CD4-positive, alpha-beta memory T cell (primary cell): ENCODE measurements at regions of chr4 and their contacts with region 1.

Region 1: DNA sequence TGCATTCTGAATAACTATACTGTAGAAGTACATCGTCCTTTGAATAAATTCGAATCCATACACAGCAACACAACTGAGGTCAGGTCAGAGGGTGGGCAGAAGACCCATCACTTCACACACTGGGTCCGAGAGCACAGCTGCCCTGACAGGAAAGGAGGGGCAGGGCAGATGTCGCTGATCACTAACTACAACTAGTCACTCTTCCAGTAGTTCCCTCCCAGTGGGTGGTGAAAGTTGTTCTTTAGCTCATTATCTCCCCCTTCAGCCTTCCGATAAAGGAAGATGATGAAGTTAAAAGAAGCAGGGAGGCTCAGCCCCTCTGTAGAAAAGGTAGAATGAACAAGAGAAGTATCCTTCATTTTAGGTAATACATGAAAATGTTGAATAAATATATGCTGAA is 278.9 kb downstream of the INPP4B start:
- DNase-seq: peak; percentile 69 to 74 (median 72)
- H3K4me3 ChIP-seq: peak overlapping the region; percentile 57 to 84
- H3K4me3 Mint-ChIP-seq: peak overlapping the region; percentile 80 to 97 (median 92)
- H3K27ac ChIP-seq: peak overlapping the region; percentile 75
- H3K27ac Mint-ChIP-seq: peak overlapping the region; percentile 86 to 98 (median 96)
- H3K4me1 ChIP-seq: peaks cover 73% of the 10 kb centered on the region
- H3K4me1 Mint-ChIP-seq: peaks cover 40 to 85% (median 50%) of the 10 kb centered on the region in 4 donors
- H3K27me3 ChIP-seq: no peaks in the 10 kb centered on the region
- H3K27me3 Mint-ChIP-seq: no peaks in the 10 kb centered on the region

Region 2: DNA sequence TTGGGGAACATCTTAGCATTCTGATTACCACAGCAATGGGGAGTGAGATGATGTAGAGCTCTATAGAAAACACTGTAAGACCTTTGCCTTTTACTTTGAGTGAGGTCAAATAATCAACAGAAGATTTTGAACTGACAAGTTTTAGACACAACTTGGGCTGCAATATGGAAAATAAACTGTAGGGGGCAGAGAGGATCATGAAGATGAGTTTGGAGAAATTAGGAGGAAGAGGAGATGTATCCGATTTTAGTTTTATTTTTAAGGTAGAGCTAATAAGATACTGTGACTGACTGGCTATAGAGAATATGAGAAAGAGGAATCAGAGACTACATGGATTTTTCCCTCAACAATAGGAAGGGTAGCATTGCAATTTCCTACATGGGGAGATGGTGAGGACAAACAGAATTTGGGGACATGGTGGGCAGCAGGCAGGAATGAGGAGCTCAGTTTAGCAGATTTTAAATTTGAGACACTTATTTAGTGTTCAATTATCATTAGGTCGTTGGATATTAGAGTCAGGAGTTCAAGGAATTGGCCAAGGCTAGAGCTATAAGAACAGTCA is 284.2 kb before region 1 on chr4:
- CTCF ChIA-PET with region 1: interaction called, 21 read pairs
- POLR2A ChIA-PET with region 1: interaction called, 12 read pairs
- intact Hi-C with region 1: loop called (anchors 1 kb)
- DNase-seq: peak; percentile 16 to 47 (median 43)
- H3K4me3 ChIP-seq: no peak overlapping the region
- H3K4me3 Mint-ChIP-seq: no peak overlapping the region
- H3K27ac ChIP-seq: no peak overlapping the region
- H3K27ac Mint-ChIP-seq: no peak overlapping the region
- H3K4me1 ChIP-seq: peaks cover 63% of the 10 kb centered on the region
- H3K4me1 Mint-ChIP-seq: peaks cover 16 to 23% (median 20%) of the 10 kb centered on the region in 4 donors
- H3K27me3 ChIP-seq: no peaks in the 10 kb centered on the region
- H3K27me3 Mint-ChIP-seq: no peaks in the 10 kb centered on the region

Region 3: GRCh38 chr4:142379277-142380057 is 187.7 kb before region 1 on chr4:
- CTCF ChIA-PET with region 1: interaction called, 4 read pairs
- POLR2A ChIA-PET with region 1: interaction called, 13 read pairs
- intact Hi-C with region 1: no loop called
- DNase-seq: no peak
- H3K4me3 ChIP-seq: no peak overlapping the region
- H3K4me3 Mint-ChIP-seq: peak overlapping the region in 5 of 8 donors; percentile 17 to 72 (median 60)
- H3K27ac ChIP-seq: no peak overlapping the region
- H3K27ac Mint-ChIP-seq: peak overlapping the region; percentile 31 to 92 (median 76)
- H3K4me1 ChIP-seq: peaks cover 84% of the 10 kb centered on the region
- H3K4me1 Mint-ChIP-seq: peaks cover 64 to 85% (median 74%) of the 10 kb centered on the region in 4 donors
- H3K27me3 ChIP-seq: no peaks in the 10 kb centered on the region
- H3K27me3 Mint-ChIP-seq: no peaks in the 10 kb centered on the region

Region 4: DNA sequence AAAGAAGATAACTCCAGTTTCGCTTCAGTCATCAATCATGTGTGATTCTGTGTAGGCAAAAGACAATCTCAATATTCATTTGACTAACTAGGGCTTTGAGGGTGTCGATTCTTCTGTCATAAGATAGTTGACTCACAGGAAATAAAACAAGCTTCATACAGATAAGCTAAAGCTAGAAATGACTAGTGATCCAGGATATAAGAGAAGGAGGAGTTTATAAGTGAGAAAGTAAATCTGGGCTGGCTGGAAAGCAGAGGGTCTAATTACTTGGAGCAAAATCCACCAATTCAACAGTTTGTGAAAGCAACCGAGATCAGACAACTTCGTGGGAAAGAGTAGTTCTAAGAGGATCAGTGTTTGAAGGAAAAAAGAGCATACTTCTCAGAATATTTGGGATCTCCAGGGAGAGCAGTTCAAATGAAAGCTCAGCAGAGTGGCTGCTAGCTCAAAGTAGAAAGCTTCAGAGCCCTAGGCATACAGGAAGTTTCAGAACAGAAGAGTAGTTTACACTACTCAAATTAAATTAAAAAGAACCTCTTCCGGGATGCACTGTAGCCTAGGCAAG is 150.4 kb before region 1 on chr4:
- CTCF ChIA-PET with region 1: interaction called, 14 read pairs
- POLR2A ChIA-PET with region 1: interaction called, 22 read pairs
- intact Hi-C with region 1: no loop called
- DNase-seq: peak; percentile 39 to 62 (median 48)
- H3K4me3 ChIP-seq: peak overlapping the region; percentile 11 to 33
- H3K4me3 Mint-ChIP-seq: peak overlapping the region; percentile 71 to 90 (median 84)
- H3K27ac ChIP-seq: peak overlapping the region; percentile 70
- H3K27ac Mint-ChIP-seq: peak overlapping the region; percentile 77 to 95 (median 92)
- H3K4me1 ChIP-seq: peaks cover 42% of the 10 kb centered on the region
- H3K4me1 Mint-ChIP-seq: peaks cover 29 to 48% (median 33%) of the 10 kb centered on the region in 4 donors
- H3K27me3 ChIP-seq: no peaks in the 10 kb centered on the region
- H3K27me3 Mint-ChIP-seq: no peaks in the 10 kb centered on the region

Region 5: GRCh38 chr4:142703694-142704309 is 136.6 kb after region 1 on chr4:
- CTCF ChIA-PET with region 1: interaction called, 11 read pairs
- POLR2A ChIA-PET with region 1: interaction called, 166 read pairs
- intact Hi-C with region 1: loop called (anchors 2 kb)
- DNase-seq: peak; percentile 62 to 77 (median 71)
- H3K4me3 ChIP-seq: peak overlapping the region; percentile 3 to 11
- H3K4me3 Mint-ChIP-seq: no peak overlapping the region
- H3K27ac ChIP-seq: peak overlapping the region; percentile 38
- H3K27ac Mint-ChIP-seq: no peak overlapping the region
- H3K4me1 ChIP-seq: peaks cover 95% of the 10 kb centered on the region
- H3K4me1 Mint-ChIP-seq: peaks cover 30 to 33% (median 31%) of the 10 kb centered on the region in 4 donors
- H3K27me3 ChIP-seq: no peaks in the 10 kb centered on the region
- H3K27me3 Mint-ChIP-seq: no peaks in the 10 kb centered on the region

Region 6: DNA sequence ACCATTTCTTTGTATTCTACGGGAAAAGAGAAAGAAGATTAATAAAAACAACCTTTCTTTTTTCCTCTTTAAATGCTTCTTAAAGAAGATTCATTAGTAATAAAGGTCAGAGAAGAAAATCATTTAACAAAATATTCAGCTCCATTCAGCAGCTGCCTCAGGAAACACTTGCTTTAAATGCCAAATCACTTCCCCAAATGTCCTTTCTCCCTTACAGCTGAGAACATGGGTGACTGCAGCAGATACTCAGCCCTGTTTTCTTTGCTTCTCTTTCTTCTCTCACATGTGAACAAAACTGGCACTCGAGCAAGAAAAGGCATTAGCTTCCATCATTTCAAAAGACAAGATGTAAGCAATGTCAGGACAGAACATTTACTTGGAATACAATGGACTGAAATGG is 158.7 kb after region 1 on chr4:
- CTCF ChIA-PET with region 1: interaction called, 23 read pairs
- POLR2A ChIA-PET with region 1: interaction called, 10 read pairs
- intact Hi-C with region 1: no loop called
- DNase-seq: no peak
- H3K4me3 ChIP-seq: no peak overlapping the region
- H3K4me3 Mint-ChIP-seq: no peak overlapping the region
- H3K27ac ChIP-seq: no peak overlapping the region
- H3K27ac Mint-ChIP-seq: no peak overlapping the region
- H3K4me1 ChIP-seq: no peaks in the 10 kb centered on the region
- H3K4me1 Mint-ChIP-seq: peaks cover 0 to 6% (median under 1%) of the 10 kb centered on the region in 4 donors
- H3K27me3 ChIP-seq: no peaks in the 10 kb centered on the region
- H3K27me3 Mint-ChIP-seq: peaks cover 0 to 1% of the 10 kb centered on the region in 2 donors